ENCODE measurements at regions of chr3 and their contacts with region 1.

Region 1: GRCh38 chr3:148246291-148246923 is 451.3 kb upstream of the AGTR1 start:
- DNase-seq: no peak
- ATAC-seq: no peak
- H3K4me3 Mint-ChIP-seq: no peak overlapping the region
- H3K27ac Mint-ChIP-seq: no peak overlapping the region
- H3K4me1 Mint-ChIP-seq: no peaks in the 10 kb centered on the region
- H3K27me3 Mint-ChIP-seq: no peaks in the 10 kb centered on the region

Region 2: GRCh38 chr3:148186881-148187280 is 59.5 kb before region 1 on chr3:
- CTCF ChIA-PET with region 1: no interaction called
- POLR2A ChIA-PET with region 1: no interaction called
- intact Hi-C with region 1: loop called in 1 of 2 experiments (anchors 10 kb)
- DNase-seq: no peak
- ATAC-seq: no peak
- H3K4me3 Mint-ChIP-seq: no peak overlapping the region
- H3K27ac Mint-ChIP-seq: no peak overlapping the region
- H3K4me1 Mint-ChIP-seq: no peaks in the 10 kb centered on the region
- H3K27me3 Mint-ChIP-seq: no peaks in the 10 kb centered on the region

Measured in activated CD4-positive, alpha-beta T cell treated with anti-CD3 and anti-CD28 coated beads for 36 hours (primary cell).